Activated CD8-positive, alpha-beta T cell treated with anti-CD3 and anti-CD28 coated beads for 36 hours (primary cell): ENCODE measurements at regions of chr11 and their contacts with region 1.

Region 1: GRCh38 chr11:128776424-128777284 is 82.8 kb downstream of the FLI1 start:
- DNase-seq: peak; percentile 47
- ATAC-seq: peak; percentile 68
- H3K4me3 Mint-ChIP-seq: no peak overlapping the region
- H3K27ac Mint-ChIP-seq: peak overlapping the region; percentile 71
- H3K4me1 Mint-ChIP-seq: peaks cover 40% of the 10 kb centered on the region
- H3K27me3 Mint-ChIP-seq: no peaks in the 10 kb centered on the region
- CTCF ChIP-seq: peak; percentile 49

Region 2: GRCh38 chr11:128733440-128734102 is 43.1 kb before region 1 on chr11:
- CTCF ChIA-PET with region 1: interaction called, 13 read pairs
- POLR2A ChIA-PET with region 1: no interaction called
- intact Hi-C with region 1: no loop called
- DNase-seq: peak; percentile 58
- ATAC-seq: peak; percentile 53
- H3K4me3 Mint-ChIP-seq: peak overlapping the region; percentile 51
- H3K27ac Mint-ChIP-seq: peak overlapping the region; percentile 68
- H3K4me1 Mint-ChIP-seq: peaks cover 92% of the 10 kb centered on the region
- H3K27me3 Mint-ChIP-seq: no peaks in the 10 kb centered on the region
- CTCF ChIP-seq: no peak

Region 3: GRCh38 chr11:128804481-128804880 is 27.8 kb after region 1 on chr11:
- CTCF ChIA-PET with region 1: no interaction called
- POLR2A ChIA-PET with region 1: no interaction called
- intact Hi-C with region 1: no loop called
- DNase-seq: no peak
- ATAC-seq: no peak
- H3K4me3 Mint-ChIP-seq: no peak overlapping the region
- H3K27ac Mint-ChIP-seq: no peak overlapping the region
- H3K4me1 Mint-ChIP-seq: peaks cover 21% of the 10 kb centered on the region
- H3K27me3 Mint-ChIP-seq: no peaks in the 10 kb centered on the region
- CTCF ChIP-seq: no peak